PC-9 (cell line): ENCODE measurements at regions of chr5 and their contacts with region 1.

Region 1: GRCh38 chr5:128667152-128667551 is 129.1 kb upstream of the FBN2 start:
- DNase-seq: no peak
- H3K4me3 ChIP-seq: no peak overlapping the region
- H3K27ac ChIP-seq: no peak overlapping the region
- H3K4me1 ChIP-seq: no peaks in the 10 kb centered on the region
- H3K27me3 ChIP-seq: no peaks in the 10 kb centered on the region
- CTCF ChIP-seq: no peak

Region 2: GRCh38 chr5:126972062-126972895 is 1694.9 kb before region 1 on chr5:
- CTCF ChIA-PET with region 1: no interaction called
- POLR2A ChIA-PET with region 1: no interaction called
- intact Hi-C with region 1: no loop called
- DNase-seq: no peak
- H3K4me3 ChIP-seq: no peak overlapping the region
- H3K27ac ChIP-seq: no peak overlapping the region
- H3K4me1 ChIP-seq: no peaks in the 10 kb centered on the region
- H3K27me3 ChIP-seq: no peaks in the 10 kb centered on the region
- CTCF ChIP-seq: no peak

Region 3: GRCh38 chr5:128681764-128682596 is 14.8 kb after region 1 on chr5:
- CTCF ChIA-PET with region 1: no interaction called
- POLR2A ChIA-PET with region 1: no interaction called
- intact Hi-C with region 1: loop called (anchors 2 kb)
- DNase-seq: peak; percentile 32 to 63
- H3K4me3 ChIP-seq: no peak overlapping the region
- H3K27ac ChIP-seq: no peak overlapping the region
- H3K4me1 ChIP-seq: peaks cover 13% of the 10 kb centered on the region
- H3K27me3 ChIP-seq: no peaks in the 10 kb centered on the region
- CTCF ChIP-seq: no peak

Region 4: GRCh38 chr5:128844354-128844923 is 177.3 kb after region 1 on chr5:
- CTCF ChIA-PET with region 1: no interaction called
- POLR2A ChIA-PET with region 1: no interaction called
- intact Hi-C with region 1: loop called (anchors 5 kb)
- DNase-seq: no peak
- H3K4me3 ChIP-seq: no peak overlapping the region
- H3K27ac ChIP-seq: no peak overlapping the region
- H3K4me1 ChIP-seq: no peaks in the 10 kb centered on the region
- H3K27me3 ChIP-seq: no peaks in the 10 kb centered on the region
- CTCF ChIP-seq: peak; percentile 65; the same call in 1 of the 2 replicates

Region 5: GRCh38 chr5:129458651-129459050 is 791.5 kb after region 1 on chr5:
- CTCF ChIA-PET with region 1: no interaction called
- POLR2A ChIA-PET with region 1: no interaction called
- intact Hi-C with region 1: no loop called
- DNase-seq: no peak
- H3K4me3 ChIP-seq: no peak overlapping the region
- H3K27ac ChIP-seq: no peak overlapping the region
- H3K4me1 ChIP-seq: no peaks in the 10 kb centered on the region
- H3K27me3 ChIP-seq: peaks cover 6% of the 10 kb centered on the region; the same call in 1 of the 2 replicates
- CTCF ChIP-seq: no peak